Activated naive CD4-positive, alpha-beta T cell treated with anti-CD3 and anti-CD28 coated beads for 36 hours (primary cell): ENCODE measurements at regions of chrX and their contacts with region 1.

Region 1: GRCh38 chrX:47193475-47194193 is at the start of gene UBA1:
- DNase-seq: peak; percentile 96
- H3K4me3 Mint-ChIP-seq: peak within 1 kb of the TSS; percentile 94
- H3K27ac Mint-ChIP-seq: peak within 1 kb of the TSS; percentile 94
- H3K4me1 Mint-ChIP-seq: peaks cover 58% of the 10 kb centered on the region
- H3K27me3 Mint-ChIP-seq: no peaks in the 10 kb centered on the region
- total RNA-seq, gene UBA1: 246 to 251 TPM

Region 2: GRCh38 chrX:47012131-47012530 is 181.5 kb before region 1 on chrX:
- CTCF ChIA-PET with region 1: no interaction called
- intact Hi-C with region 1: no loop called
- DNase-seq: no peak
- H3K4me3 Mint-ChIP-seq: no peak overlapping the region
- H3K27ac Mint-ChIP-seq: no peak overlapping the region
- H3K4me1 Mint-ChIP-seq: no peaks in the 10 kb centered on the region
- H3K27me3 Mint-ChIP-seq: no peaks in the 10 kb centered on the region

Region 3: GRCh38 chrX:47129157-47129898 is 64.3 kb before region 1 on chrX:
- CTCF ChIA-PET with region 1: no interaction called
- intact Hi-C with region 1: loop called (anchors 1 kb)
- DNase-seq: peak; percentile 95
- H3K4me3 Mint-ChIP-seq: peak overlapping the region; percentile 99
- H3K27ac Mint-ChIP-seq: peak overlapping the region; percentile 98
- H3K4me1 Mint-ChIP-seq: peaks cover 5% of the 10 kb centered on the region
- H3K27me3 Mint-ChIP-seq: no peaks in the 10 kb centered on the region

Region 4: DNA sequence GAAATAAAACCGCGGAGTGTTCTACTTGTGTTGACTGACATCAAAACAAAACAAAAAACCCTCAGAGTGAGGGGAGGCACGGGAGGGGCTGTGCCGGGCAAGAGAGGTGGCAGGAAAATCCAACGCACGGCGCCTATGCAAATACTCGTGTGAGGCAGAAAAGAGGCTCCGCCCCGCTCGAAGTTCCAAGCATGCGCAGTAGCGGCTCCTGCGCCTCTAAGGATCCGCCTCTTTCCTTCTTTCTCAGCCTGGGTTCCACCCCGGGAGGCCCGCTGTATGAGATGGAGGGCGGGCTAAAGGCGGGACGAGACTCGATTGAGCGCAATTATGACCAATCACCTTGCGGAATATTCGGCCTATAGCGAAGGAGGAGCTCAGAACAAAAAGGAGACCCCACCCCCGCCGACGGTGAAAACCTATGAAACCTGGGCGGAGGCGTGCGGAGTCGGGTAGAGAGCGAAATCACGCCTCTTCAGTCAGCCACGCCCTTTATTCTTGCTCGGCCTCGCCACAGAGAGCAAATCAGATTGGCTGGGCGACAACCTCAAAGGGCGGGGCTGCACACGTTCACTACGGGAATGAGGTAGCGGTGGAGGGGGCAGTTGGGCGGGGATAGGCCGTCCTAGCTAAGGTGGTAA is 24.1 kb after region 1 on chrX:
- CTCF ChIA-PET with region 1: no interaction called
- intact Hi-C with region 1: loop called (anchors 1 kb)
- DNase-seq: peak; percentile 98
- H3K4me3 Mint-ChIP-seq: peak overlapping the region; percentile 80
- H3K27ac Mint-ChIP-seq: peak overlapping the region; percentile 98
- H3K4me1 Mint-ChIP-seq: peaks cover 37% of the 10 kb centered on the region
- H3K27me3 Mint-ChIP-seq: no peaks in the 10 kb centered on the region

Region 5: DNA sequence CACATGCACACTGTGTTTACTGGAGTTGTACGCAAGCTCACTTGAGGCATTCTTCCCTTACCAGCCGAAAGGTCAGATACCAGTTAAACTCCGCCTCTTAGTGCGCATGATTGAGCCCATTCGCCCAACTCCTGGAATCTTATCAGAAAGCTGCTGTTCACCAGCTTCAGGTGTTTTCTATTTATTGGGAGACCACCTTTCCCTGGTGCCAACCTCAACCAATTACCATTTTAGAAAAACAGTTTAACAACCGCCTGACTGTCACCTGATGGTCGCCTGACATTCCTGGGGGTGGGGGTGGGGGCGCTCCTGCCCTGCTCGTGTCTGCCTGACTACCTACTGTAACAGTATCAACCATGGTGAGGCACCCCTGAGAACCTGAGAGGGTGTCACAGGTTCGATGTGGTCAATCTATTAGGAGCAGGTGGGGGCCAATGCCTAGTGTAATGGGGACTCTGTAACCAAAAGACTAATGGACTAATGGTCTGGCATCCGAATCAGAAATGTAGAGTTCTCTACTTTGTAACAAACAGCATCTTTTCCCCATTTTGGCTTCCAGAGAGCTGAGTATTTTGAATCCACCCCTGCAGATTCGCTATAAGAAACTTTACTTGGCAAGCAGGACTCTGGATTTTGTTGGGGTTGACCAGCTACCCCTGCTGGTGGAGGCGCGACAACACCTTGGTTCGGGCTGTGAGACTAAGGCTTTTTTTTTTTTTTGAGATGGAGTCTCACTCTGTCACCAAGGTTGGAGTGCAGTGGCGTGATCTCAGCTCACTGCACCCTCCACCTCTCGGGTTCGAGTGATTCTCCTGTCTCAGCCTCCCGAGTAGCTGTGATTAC is 118.5 kb after region 1 on chrX:
- CTCF ChIA-PET with region 1: interaction called, 5 read pairs
- intact Hi-C with region 1: loop called (anchors 1 kb)
- DNase-seq: peak; percentile 69
- H3K4me3 Mint-ChIP-seq: no peak overlapping the region
- H3K27ac Mint-ChIP-seq: no peak overlapping the region
- H3K4me1 Mint-ChIP-seq: peaks cover 3% of the 10 kb centered on the region
- H3K27me3 Mint-ChIP-seq: no peaks in the 10 kb centered on the region

Region 6: GRCh38 chrX:47384502-47384901 is 190.9 kb after region 1 on chrX:
- CTCF ChIA-PET with region 1: interaction called, 9 read pairs
- intact Hi-C with region 1: loop called (anchors 1 kb)
- DNase-seq: peak; percentile 79
- H3K4me3 Mint-ChIP-seq: no peak overlapping the region
- H3K27ac Mint-ChIP-seq: no peak overlapping the region
- H3K4me1 Mint-ChIP-seq: peaks cover 25% of the 10 kb centered on the region
- H3K27me3 Mint-ChIP-seq: no peaks in the 10 kb centered on the region

Region 7: GRCh38 chrX:47523297-47523696 is 329.7 kb after region 1 on chrX:
- CTCF ChIA-PET with region 1: no interaction called
- intact Hi-C with region 1: loop called (anchors 1 kb)
- DNase-seq: peak; percentile 82
- H3K4me3 Mint-ChIP-seq: peak overlapping the region; percentile 62
- H3K27ac Mint-ChIP-seq: no peak overlapping the region
- H3K4me1 Mint-ChIP-seq: no peaks in the 10 kb centered on the region
- H3K27me3 Mint-ChIP-seq: no peaks in the 10 kb centered on the region

Region 8: GRCh38 chrX:48021026-48021900 is 827.6 kb after region 1 on chrX:
- CTCF ChIA-PET with region 1: no interaction called
- intact Hi-C with region 1: loop called (anchors 5 kb)
- DNase-seq: peak; percentile 82
- H3K4me3 Mint-ChIP-seq: peak overlapping the region; percentile 84
- H3K27ac Mint-ChIP-seq: peak overlapping the region; percentile 95
- H3K4me1 Mint-ChIP-seq: peaks cover 10% of the 10 kb centered on the region
- H3K27me3 Mint-ChIP-seq: no peaks in the 10 kb centered on the region